ENCODE measurements at regions of chrX and their contacts with region 1.

Region 1: DNA sequence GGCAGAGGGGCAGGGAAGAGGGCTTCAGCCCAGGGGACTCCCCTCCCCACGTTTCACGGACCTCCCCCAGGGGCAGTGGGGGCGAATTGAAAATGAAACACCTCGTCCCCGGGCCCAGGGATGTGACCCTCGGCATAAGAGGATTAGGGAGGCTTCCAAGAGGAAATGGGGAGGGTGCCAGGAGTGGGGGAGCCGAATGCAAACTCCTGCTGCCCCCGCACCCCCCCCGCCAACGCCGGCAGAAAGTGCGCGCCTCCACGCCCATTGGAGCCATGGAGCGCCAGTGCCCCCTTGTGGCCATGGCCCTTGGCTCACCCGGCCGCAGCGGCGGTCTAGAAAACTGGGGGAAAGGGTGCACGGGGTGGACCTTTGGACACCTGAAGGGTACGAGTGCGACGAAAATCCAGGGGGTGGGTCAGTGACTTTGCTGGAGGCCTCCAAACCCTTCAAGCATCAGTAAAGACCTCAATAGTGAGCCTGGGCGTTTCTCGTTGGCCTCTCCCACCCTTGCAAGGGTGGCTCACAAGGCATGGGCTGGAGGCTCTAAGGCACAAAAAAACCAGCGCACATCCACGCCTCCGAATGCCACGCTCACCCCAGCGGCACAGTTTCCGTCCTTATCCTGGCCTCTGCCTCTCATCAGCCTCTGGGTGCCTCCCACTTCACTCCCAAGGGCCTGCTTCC is 120.8 kb upstream of the PJA1 start:
- DNase-seq: peak in 4 of 5 donors; percentile 40 to 52 (median 45)
- H3K4me3 ChIP-seq: peak overlapping the region in 1 of 2 donors; percentile 19
- H3K4me3 Mint-ChIP-seq: peak overlapping the region in 6 of 8 donors; percentile 17 to 61 (median 41)
- H3K27ac ChIP-seq: no peak overlapping the region
- H3K27ac Mint-ChIP-seq: no peak overlapping the region
- H3K4me1 ChIP-seq: peaks cover 4% of the 10 kb centered on the region
- H3K4me1 Mint-ChIP-seq: peaks cover 0 to 9% (median 1%) of the 10 kb centered on the region in 4 donors
- H3K27me3 ChIP-seq: no peaks in the 10 kb centered on the region
- H3K27me3 Mint-ChIP-seq: no peaks in the 10 kb centered on the region

Region 2: DNA sequence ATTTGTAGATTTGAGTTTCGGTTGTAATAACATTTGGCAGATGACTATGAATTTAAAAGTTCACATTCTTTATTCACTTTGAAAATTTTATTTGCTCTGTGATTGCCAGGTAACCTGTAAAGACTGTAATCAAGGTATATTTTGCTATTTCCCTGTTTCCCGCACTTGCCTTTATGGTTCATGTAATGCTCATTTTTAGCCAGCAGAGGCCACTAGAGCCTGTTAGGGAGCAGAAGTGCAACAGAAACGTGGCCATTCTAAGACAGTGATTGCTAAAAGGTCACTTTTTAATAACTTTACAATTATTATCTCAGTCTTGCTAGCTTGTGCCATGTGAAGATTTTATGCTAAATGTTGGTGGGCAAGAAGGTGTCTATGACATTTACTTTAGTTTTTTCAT is 774.8 kb before region 1 on chrX:
- CTCF ChIA-PET with region 1: no interaction called
- POLR2A ChIA-PET with region 1: no interaction called
- intact Hi-C with region 1: loop called (anchors 5 kb)
- DNase-seq: peak in 4 of 5 donors; percentile 26 to 43 (median 36)
- H3K4me3 ChIP-seq: no peak overlapping the region
- H3K4me3 Mint-ChIP-seq: no peak overlapping the region
- H3K27ac ChIP-seq: no peak overlapping the region
- H3K27ac Mint-ChIP-seq: peak overlapping the region in 1 of 7 donors; percentile 2
- H3K4me1 ChIP-seq: peaks cover 19% of the 10 kb centered on the region
- H3K4me1 Mint-ChIP-seq: peaks cover 15 to 31% (median 23%) of the 10 kb centered on the region in 4 donors
- H3K27me3 ChIP-seq: no peaks in the 10 kb centered on the region
- H3K27me3 Mint-ChIP-seq: no peaks in the 10 kb centered on the region

Region 3: GRCh38 chrX:68822641-68823410 is 463.2 kb before region 1 on chrX:
- CTCF ChIA-PET with region 1: interaction called, 47 read pairs
- POLR2A ChIA-PET with region 1: no interaction called
- intact Hi-C with region 1: loop called (anchors 1 kb)
- DNase-seq: peak in 1 of 5 donors; percentile 21
- H3K4me3 ChIP-seq: no peak overlapping the region
- H3K4me3 Mint-ChIP-seq: peak overlapping the region in 1 of 8 donors; percentile 9
- H3K27ac ChIP-seq: no peak overlapping the region
- H3K27ac Mint-ChIP-seq: no peak overlapping the region
- H3K4me1 ChIP-seq: no peaks in the 10 kb centered on the region
- H3K4me1 Mint-ChIP-seq: peaks cover 0 to 4% (median 3%) of the 10 kb centered on the region in 4 donors
- H3K27me3 ChIP-seq: no peaks in the 10 kb centered on the region
- H3K27me3 Mint-ChIP-seq: no peaks in the 10 kb centered on the region

Region 4: DNA sequence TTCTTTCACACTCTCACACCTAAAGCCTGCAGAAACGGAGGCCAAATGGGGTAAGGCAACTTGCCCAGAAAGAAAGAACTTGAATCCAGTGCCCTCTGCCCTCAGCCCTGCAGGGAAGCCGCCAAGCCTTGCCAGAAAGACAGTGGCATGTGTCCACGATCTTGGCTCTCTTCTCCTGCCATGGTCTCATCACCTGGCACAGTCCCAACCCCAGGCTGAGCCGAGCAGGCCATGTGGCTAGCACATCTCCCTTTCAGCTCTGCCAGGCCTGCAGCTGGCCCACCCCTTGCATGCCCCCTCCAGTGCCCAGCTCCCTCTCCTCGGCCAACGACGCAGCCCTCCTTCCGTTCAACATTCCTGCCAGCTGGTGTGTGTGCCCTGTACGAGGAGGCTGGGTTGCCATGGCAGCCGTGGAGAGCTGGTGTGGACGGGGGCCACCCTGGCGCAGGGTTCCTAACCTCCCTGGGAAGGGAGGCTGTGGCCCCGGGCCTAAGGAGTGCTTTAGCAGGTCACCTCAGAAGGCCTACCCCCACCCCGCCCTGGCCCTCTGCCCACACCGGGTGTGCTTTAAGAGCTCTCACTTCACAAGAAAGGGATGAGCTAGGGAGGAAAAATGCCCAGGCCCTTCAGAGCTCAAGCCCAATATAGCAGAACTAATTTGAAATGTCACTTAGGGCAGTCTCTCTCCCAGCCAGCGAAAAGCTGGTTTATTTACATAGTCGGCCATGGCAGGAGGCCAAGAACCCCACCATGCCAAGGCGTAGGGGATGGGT is 47.7 kb before region 1 on chrX:
- CTCF ChIA-PET with region 1: no interaction called
- POLR2A ChIA-PET with region 1: no interaction called
- intact Hi-C with region 1: no loop called
- DNase-seq: no peak
- H3K4me3 ChIP-seq: no peak overlapping the region
- H3K4me3 Mint-ChIP-seq: no peak overlapping the region
- H3K27ac ChIP-seq: no peak overlapping the region
- H3K27ac Mint-ChIP-seq: no peak overlapping the region
- H3K4me1 ChIP-seq: no peaks in the 10 kb centered on the region
- H3K4me1 Mint-ChIP-seq: no peaks in the 10 kb centered on the region
- H3K27me3 ChIP-seq: no peaks in the 10 kb centered on the region
- H3K27me3 Mint-ChIP-seq: no peaks in the 10 kb centered on the region

Region 5: DNA sequence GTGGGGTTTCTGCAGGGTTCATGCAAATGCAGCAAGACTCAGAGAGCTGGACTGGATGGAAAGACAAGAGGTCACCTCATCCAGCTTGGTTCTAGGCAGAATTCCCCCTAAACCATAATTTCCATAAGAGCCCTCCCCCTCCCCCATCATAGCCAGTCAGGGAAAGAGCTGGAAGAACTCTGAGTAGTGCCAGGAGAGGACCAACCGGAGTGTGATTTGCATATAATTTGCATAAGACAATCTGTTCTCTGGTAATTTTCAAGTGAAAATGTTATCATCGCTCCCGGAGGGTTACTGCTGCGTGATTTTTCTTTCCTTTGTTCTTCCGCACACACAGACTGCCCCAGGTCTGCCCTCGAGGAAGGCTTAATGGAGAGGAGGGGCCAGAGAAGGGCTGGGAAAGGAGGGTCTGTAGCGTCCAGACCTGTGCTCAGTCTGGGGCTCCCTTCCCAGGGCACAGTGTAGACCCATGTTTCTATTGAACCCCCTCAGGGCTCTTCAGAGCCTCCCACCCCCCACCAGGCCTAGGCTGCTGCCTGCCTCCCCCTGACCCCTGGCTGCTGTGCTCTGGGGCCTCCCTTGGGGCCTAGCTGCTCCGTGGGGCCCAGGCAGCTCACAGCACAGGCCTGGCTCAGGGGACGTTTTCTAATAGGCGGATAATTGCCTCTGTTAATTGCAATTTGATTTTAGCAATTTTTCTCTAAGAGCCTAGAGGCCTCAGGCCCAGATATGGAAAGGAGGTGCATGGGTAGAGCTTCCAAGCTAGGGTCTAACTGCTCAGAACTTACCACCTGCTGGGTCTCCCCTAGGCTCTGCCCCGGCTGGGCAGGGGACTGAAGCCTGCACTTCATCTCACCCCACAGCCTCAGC is 30.4 kb before region 1 on chrX:
- CTCF ChIA-PET with region 1: no interaction called
- POLR2A ChIA-PET with region 1: no interaction called
- intact Hi-C with region 1: no loop called
- DNase-seq: no peak
- H3K4me3 ChIP-seq: no peak overlapping the region
- H3K4me3 Mint-ChIP-seq: no peak overlapping the region
- H3K27ac ChIP-seq: no peak overlapping the region
- H3K27ac Mint-ChIP-seq: no peak overlapping the region
- H3K4me1 ChIP-seq: no peaks in the 10 kb centered on the region
- H3K4me1 Mint-ChIP-seq: no peaks in the 10 kb centered on the region
- H3K27me3 ChIP-seq: no peaks in the 10 kb centered on the region
- H3K27me3 Mint-ChIP-seq: peaks cover 2% of the 10 kb centered on the region in 2 donors

Region 6: DNA sequence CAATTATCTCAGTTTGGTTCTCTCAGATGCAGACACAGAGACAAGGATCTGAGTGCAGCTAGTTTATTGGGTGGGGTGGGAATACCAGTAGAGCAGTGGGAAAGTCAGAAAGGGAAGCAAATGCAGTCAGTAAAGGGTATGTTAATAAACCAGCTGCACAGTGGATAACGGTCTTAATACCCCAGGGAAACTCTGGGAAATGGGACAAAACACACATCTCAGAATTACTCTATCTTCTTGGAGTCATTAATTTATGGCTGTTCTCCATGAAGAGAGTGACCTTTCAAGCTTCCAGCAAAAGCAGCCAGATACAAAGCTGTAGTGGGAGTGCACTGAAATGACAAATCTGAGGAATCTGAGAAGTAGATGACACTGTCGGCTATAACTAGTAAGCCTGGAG is 144.8 kb after region 1 on chrX:
- CTCF ChIA-PET with region 1: no interaction called
- POLR2A ChIA-PET with region 1: no interaction called
- intact Hi-C with region 1: no loop called
- DNase-seq: no peak
- H3K4me3 ChIP-seq: no peak overlapping the region
- H3K4me3 Mint-ChIP-seq: no peak overlapping the region
- H3K27ac ChIP-seq: no peak overlapping the region
- H3K27ac Mint-ChIP-seq: peak overlapping the region in 1 of 7 donors; percentile 33
- H3K4me1 ChIP-seq: no peaks in the 10 kb centered on the region
- H3K4me1 Mint-ChIP-seq: no peaks in the 10 kb centered on the region
- H3K27me3 ChIP-seq: no peaks in the 10 kb centered on the region
- H3K27me3 Mint-ChIP-seq: peaks cover 7 to 8% of the 10 kb centered on the region in 2 donors

Region 7: DNA sequence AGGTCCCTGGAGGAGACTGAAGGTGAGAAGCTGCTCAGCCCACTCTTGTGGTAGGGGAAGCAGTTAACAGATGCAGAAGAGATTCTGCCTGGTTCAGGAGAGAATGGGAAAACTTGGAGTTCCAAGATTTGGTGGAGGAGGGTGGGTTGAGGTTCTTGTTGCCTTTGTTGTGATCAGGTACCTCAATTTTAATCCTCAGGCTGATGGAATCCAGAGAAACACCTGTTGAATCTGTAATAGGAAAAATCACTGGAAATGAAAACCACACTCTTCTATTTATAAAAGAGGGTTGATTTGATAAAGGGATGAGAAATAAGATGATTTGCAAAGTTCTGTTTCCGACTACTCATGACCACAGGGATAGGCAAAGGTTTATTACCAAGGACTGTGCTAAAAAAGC is 462.0 kb after region 1 on chrX:
- CTCF ChIA-PET with region 1: no interaction called
- POLR2A ChIA-PET with region 1: no interaction called
- intact Hi-C with region 1: no loop called
- DNase-seq: no peak
- H3K4me3 ChIP-seq: no peak overlapping the region
- H3K4me3 Mint-ChIP-seq: no peak overlapping the region
- H3K27ac ChIP-seq: no peak overlapping the region
- H3K27ac Mint-ChIP-seq: no peak overlapping the region
- H3K4me1 ChIP-seq: no peaks in the 10 kb centered on the region
- H3K4me1 Mint-ChIP-seq: no peaks in the 10 kb centered on the region
- H3K27me3 ChIP-seq: no peaks in the 10 kb centered on the region
- H3K27me3 Mint-ChIP-seq: no peaks in the 10 kb centered on the region